CD8-positive, alpha-beta T cell (primary cell): ENCODE measurements at regions of chr1 and their contacts with region 1.

Region 1: GRCh38 chr1:192609110-192610079 is 26.6 kb upstream of the RGS13 start:
- DNase-seq: peak; percentile 24 to 88 (median 58)
- ATAC-seq: peak; percentile 95
- H3K4me3 ChIP-seq: no peak overlapping the region
- H3K4me3 Mint-ChIP-seq: peak overlapping the region; percentile 69
- H3K27ac ChIP-seq: peak overlapping the region; percentile 20 to 57
- H3K27ac Mint-ChIP-seq: peak overlapping the region; percentile 86
- H3K4me1 ChIP-seq: peaks cover 14% of the 10 kb centered on the region
- H3K4me1 Mint-ChIP-seq: peaks cover 16% of the 10 kb centered on the region
- H3K27me3 ChIP-seq: peaks cover 0 to 3% of the 10 kb centered on the region in 2 experiments
- H3K27me3 Mint-ChIP-seq: no peaks in the 10 kb centered on the region
- CTCF ChIP-seq: no peak

Region 2: GRCh38 chr1:192477630-192478029 is 131.8 kb before region 1 on chr1:
- CTCF ChIA-PET with region 1: interaction called, 103 read pairs
- POLR2A ChIA-PET with region 1: interaction called, 4 read pairs
- intact Hi-C with region 1: loop called (anchors 1 kb)
- DNase-seq: peak in 2 of 9 experiments; percentile 52 to 65
- ATAC-seq: peak; percentile 77
- H3K4me3 ChIP-seq: no peak overlapping the region
- H3K4me3 Mint-ChIP-seq: no peak overlapping the region
- H3K27ac ChIP-seq: no peak overlapping the region
- H3K27ac Mint-ChIP-seq: no peak overlapping the region
- H3K4me1 ChIP-seq: no peaks in the 10 kb centered on the region
- H3K4me1 Mint-ChIP-seq: no peaks in the 10 kb centered on the region
- H3K27me3 ChIP-seq: peaks cover 0 to 2% of the 10 kb centered on the region in 2 experiments
- H3K27me3 Mint-ChIP-seq: no peaks in the 10 kb centered on the region
- CTCF ChIP-seq: peak; percentile 64

Region 3: GRCh38 chr1:192516776-192517297 is 92.6 kb before region 1 on chr1:
- CTCF ChIA-PET with region 1: interaction called, 3 read pairs
- POLR2A ChIA-PET with region 1: no interaction called
- intact Hi-C with region 1: loop called in 1 of 2 experiments (anchors 2 kb)
- DNase-seq: peak; percentile 18 to 96 (median 55)
- ATAC-seq: peak; percentile 93
- H3K4me3 ChIP-seq: peak overlapping the region; percentile 15
- H3K4me3 Mint-ChIP-seq: peak overlapping the region; percentile 65
- H3K27ac ChIP-seq: peak overlapping the region; percentile 6 to 62
- H3K27ac Mint-ChIP-seq: peak overlapping the region; percentile 92
- H3K4me1 ChIP-seq: peaks cover 25% of the 10 kb centered on the region
- H3K4me1 Mint-ChIP-seq: peaks cover 50% of the 10 kb centered on the region
- H3K27me3 ChIP-seq: no peaks in the 10 kb centered on the region
- H3K27me3 Mint-ChIP-seq: no peaks in the 10 kb centered on the region
- CTCF ChIP-seq: no peak

Region 4: GRCh38 chr1:192539297-192540092 is 69.9 kb before region 1 on chr1:
- CTCF ChIA-PET with region 1: no interaction called
- POLR2A ChIA-PET with region 1: no interaction called
- intact Hi-C with region 1: loop called in 1 of 2 experiments (anchors 5 kb)
- DNase-seq: peak in 1 of 9 experiments; percentile 46
- ATAC-seq: peak; percentile 28
- H3K4me3 ChIP-seq: no peak overlapping the region
- H3K4me3 Mint-ChIP-seq: peak overlapping the region; percentile 3
- H3K27ac ChIP-seq: peak overlapping the region; percentile 18 to 19
- H3K27ac Mint-ChIP-seq: peak overlapping the region; percentile 88
- H3K4me1 ChIP-seq: peaks cover 13% of the 10 kb centered on the region
- H3K4me1 Mint-ChIP-seq: peaks cover 28% of the 10 kb centered on the region
- H3K27me3 ChIP-seq: no peaks in the 10 kb centered on the region
- H3K27me3 Mint-ChIP-seq: no peaks in the 10 kb centered on the region
- CTCF ChIP-seq: no peak

Region 5: DNA sequence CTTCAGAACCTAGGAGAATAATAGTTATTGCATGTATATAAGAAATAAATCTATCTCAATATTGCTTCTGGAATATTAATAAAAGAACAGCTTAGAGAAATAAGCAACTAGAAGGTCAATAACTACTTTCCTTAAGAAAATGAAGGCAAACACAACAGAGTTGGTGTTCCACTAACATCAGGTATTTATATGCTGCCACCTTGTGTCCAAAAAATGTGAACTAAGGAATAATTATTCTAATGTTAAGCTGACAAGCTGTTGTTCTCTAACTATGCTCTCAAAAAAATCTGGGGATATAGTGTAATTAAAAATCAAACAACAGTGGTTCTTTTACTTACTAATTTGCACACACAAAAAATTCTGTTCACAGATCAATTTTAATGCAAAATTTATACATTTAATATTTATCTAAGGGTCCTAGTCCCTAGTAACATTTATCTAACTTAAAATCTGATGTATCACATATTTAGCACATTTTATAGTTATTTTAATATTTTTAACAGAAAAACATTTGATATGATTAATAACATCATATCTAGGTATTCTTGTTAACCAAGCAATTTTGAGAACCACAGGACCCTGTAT is 410.1 kb after region 1 on chr1:
- CTCF ChIA-PET with region 1: interaction called, 3 read pairs
- POLR2A ChIA-PET with region 1: no interaction called
- intact Hi-C with region 1: loop called (anchors 2 to 10 kb)
- DNase-seq: peak in 2 of 9 experiments; percentile 53 to 63
- ATAC-seq: peak; percentile 57
- H3K4me3 ChIP-seq: no peak overlapping the region
- H3K4me3 Mint-ChIP-seq: no peak overlapping the region
- H3K27ac ChIP-seq: no peak overlapping the region
- H3K27ac Mint-ChIP-seq: no peak overlapping the region
- H3K4me1 ChIP-seq: no peaks in the 10 kb centered on the region
- H3K4me1 Mint-ChIP-seq: no peaks in the 10 kb centered on the region
- H3K27me3 ChIP-seq: no peaks in the 10 kb centered on the region
- H3K27me3 Mint-ChIP-seq: no peaks in the 10 kb centered on the region
- CTCF ChIP-seq: peak; percentile 48

Region 6: GRCh38 chr1:193059268-193060225 is 450.2 kb after region 1 on chr1 and contains the starts of genes RO60 and UCHL5:
- CTCF ChIA-PET with region 1: no interaction called
- POLR2A ChIA-PET with region 1: no interaction called
- intact Hi-C with region 1: loop called in 1 of 2 experiments (anchors 1 kb)
- DNase-seq: peak; percentile 86 to 99 (median 93)
- ATAC-seq: peak; percentile 95
- H3K4me3 ChIP-seq: peak within 1 kb of the TSS; percentile 61 to 82
- H3K4me3 Mint-ChIP-seq: peak within 1 kb of the TSS; percentile 100
- H3K27ac ChIP-seq: peak within 1 kb of the TSS; percentile 91 to 92
- H3K27ac Mint-ChIP-seq: peak within 1 kb of the TSS; percentile 100
- H3K4me1 ChIP-seq: peaks cover 32% of the 10 kb centered on the region
- H3K4me1 Mint-ChIP-seq: peaks cover 67% of the 10 kb centered on the region
- H3K27me3 ChIP-seq: no peaks in the 10 kb centered on the region
- H3K27me3 Mint-ChIP-seq: no peaks in the 10 kb centered on the region
- CTCF ChIP-seq: no peak
- total RNA-seq, gene RO60: 51.6 to 52.8 TPM
- total RNA-seq, gene UCHL5: 11.7 to 13.1 TPM